Activated T-helper 2 cell treated with anti-CD3 and anti-CD28 coated beads, Interferon-gamma antibody, Interleukin-2, Interleukin-4, amounts not matched to agents 10 μg/mL and 5 μg/mL and 100 μg/mL, durations not matched to agents 14 hours and 24 hours and 36 hours (primary cell): ENCODE measurements at regions of chr2 and their contacts with region 1.

Region 1: GRCh38 chr2:18209919-18210639 is 331.6 kb downstream of the KCNS3 start:
- DNase-seq: no peak
- H3K4me3 Mint-ChIP-seq: no peak overlapping the region
- H3K27ac Mint-ChIP-seq: no peak overlapping the region
- H3K4me1 Mint-ChIP-seq: no peaks in the 10 kb centered on the region
- H3K27me3 Mint-ChIP-seq: no peaks in the 10 kb centered on the region

Region 2: GRCh38 chr2:18237298-18237697 is 27.2 kb after region 1 on chr2:
- intact Hi-C with region 1: loop called (anchors 2 kb)
- DNase-seq: no peak
- H3K4me3 Mint-ChIP-seq: no peak overlapping the region
- H3K27ac Mint-ChIP-seq: no peak overlapping the region
- H3K4me1 Mint-ChIP-seq: no peaks in the 10 kb centered on the region
- H3K27me3 Mint-ChIP-seq: no peaks in the 10 kb centered on the region